Activated naive CD4-positive, alpha-beta T cell treated with anti-CD3 and anti-CD28 coated beads for 36 hours (primary cell): ENCODE measurements at regions of chr12 and their contacts with region 1.

Region 1: DNA sequence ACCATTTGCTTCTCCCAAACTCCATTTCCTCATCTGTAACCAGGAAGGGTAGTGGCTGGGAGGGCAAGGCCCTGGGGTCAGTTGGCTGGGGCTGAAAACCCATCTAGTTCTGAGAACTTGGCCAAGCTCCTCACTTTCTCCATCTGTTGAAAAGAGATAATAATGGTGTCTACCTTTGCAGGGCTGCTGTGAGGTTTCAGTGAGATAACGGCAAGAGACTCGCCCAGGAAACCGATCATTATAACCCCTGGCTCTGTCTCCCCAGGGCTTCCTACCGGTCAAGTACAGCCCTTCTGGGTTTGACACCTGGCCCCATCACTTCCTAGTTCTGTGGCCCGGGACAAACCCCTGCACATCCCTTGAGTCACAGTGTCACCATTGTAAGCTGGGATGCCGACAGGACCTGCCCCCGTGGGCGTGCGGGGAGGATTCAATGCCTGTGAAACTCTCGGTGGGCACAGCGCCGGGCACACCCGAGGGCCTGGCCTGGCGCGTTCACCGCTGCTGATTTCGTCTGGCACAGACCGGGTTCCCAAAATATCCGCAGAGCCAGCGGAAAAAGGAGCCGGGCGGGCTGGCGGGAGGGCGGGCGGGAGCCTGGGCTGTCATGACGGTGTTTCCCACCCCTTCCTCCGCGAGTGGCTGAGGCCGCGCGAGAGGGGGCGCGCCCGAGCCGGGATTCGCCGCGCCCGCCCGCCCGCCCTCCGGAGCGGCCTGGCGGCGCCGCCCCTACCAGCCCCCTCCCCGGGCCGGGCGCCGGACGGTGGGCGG is 4.4 kb downstream of the KMT5A start:
- DNase-seq: peak; percentile 85
- H3K4me3 Mint-ChIP-seq: peak overlapping the region; percentile 80
- H3K27ac Mint-ChIP-seq: peak overlapping the region; percentile 81
- H3K4me1 Mint-ChIP-seq: peaks cover 31% of the 10 kb centered on the region
- H3K27me3 Mint-ChIP-seq: no peaks in the 10 kb centered on the region

Region 2: GRCh38 chr12:122974274-122974891 is 414.0 kb before region 1 on chr12:
- CTCF ChIA-PET with region 1: no interaction called
- intact Hi-C with region 1: loop called (anchors 2 kb)
- DNase-seq: peak; percentile 100
- H3K4me3 Mint-ChIP-seq: peak overlapping the region; percentile 90
- H3K27ac Mint-ChIP-seq: peak overlapping the region; percentile 100
- H3K4me1 Mint-ChIP-seq: peaks cover 33% of the 10 kb centered on the region
- H3K27me3 Mint-ChIP-seq: no peaks in the 10 kb centered on the region

Region 3: GRCh38 chr12:123436017-123436964 is 47.9 kb after region 1 on chr12 and contains the start of gene RILPL2:
- CTCF ChIA-PET with region 1: no interaction called
- intact Hi-C with region 1: loop called (anchors 1 kb)
- DNase-seq: peak; percentile 97
- H3K4me3 Mint-ChIP-seq: peak within 1 kb of the TSS; percentile 92
- H3K27ac Mint-ChIP-seq: peak within 1 kb of the TSS; percentile 93
- H3K4me1 Mint-ChIP-seq: peaks cover 43% of the 10 kb centered on the region
- H3K27me3 Mint-ChIP-seq: no peaks in the 10 kb centered on the region
- total RNA-seq, gene RILPL2: 8.1 to 9.1 TPM

Region 4: GRCh38 chr12:123580772-123581171 is 192.4 kb after region 1 on chr12:
- CTCF ChIA-PET with region 1: interaction called, 9 read pairs
- intact Hi-C with region 1: loop called (anchors 1 kb)
- DNase-seq: no peak
- H3K4me3 Mint-ChIP-seq: no peak overlapping the region
- H3K27ac Mint-ChIP-seq: no peak overlapping the region
- H3K4me1 Mint-ChIP-seq: peaks cover 22% of the 10 kb centered on the region
- H3K27me3 Mint-ChIP-seq: no peaks in the 10 kb centered on the region

Region 5: DNA sequence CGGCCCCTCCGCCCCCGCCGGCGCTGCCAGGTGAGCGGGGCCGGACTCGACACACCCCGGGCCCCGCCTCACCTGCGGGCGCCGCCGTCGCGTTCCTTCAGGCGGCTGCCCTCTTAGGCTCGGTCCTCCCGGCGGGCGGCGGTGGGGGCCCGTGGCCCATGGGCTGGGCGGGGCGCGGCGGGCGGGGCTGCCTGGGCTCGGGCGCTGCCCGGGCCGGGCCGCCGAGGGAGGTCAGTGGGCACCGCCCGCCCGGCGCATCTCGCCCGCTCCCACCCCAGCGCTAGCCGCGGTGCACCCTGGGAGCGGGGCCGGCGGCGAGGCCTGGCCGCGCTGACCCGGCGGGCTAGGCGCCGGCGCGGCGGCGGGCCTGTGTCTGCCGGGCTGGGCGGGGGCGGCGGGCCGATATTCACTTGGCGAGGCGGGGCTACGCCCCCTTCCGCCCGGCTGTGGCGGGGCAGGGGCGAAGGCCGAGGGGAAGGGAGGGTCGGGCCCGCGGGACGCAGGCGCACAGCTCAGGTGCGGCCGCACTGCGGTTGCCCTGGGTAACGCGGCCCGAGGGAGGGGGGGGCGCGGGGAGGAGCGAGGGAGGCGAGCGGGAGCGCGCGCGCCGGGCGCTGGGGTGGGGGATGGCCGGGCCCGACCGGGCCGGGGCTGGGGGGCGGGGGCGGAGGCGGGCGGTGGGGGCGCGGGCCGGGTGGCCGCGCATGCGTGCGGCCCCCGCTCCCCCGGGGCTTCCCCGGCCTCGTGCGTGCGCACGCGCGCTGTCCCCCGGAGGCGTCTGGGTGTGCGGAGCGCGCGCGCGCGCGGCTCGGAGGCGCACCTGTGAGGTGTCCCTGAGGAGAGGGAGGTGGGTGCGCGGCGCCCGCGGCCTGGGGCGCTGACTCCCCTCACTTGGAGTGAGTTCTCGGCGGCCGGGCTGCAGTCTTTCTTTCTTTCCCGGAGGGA is 584.4 kb after region 1 on chr12 and contains the starts of genes CCDC92 and ZNF664:
- CTCF ChIA-PET with region 1: no interaction called
- intact Hi-C with region 1: loop called (anchors 5 kb)
- DNase-seq: peak; percentile 94
- H3K4me3 Mint-ChIP-seq: peak within 1 kb of the TSS; percentile 88
- H3K27ac Mint-ChIP-seq: peak within 1 kb of the TSS; percentile 61
- H3K4me1 Mint-ChIP-seq: peaks cover 33% of the 10 kb centered on the region
- H3K27me3 Mint-ChIP-seq: no peaks in the 10 kb centered on the region
- total RNA-seq, gene CCDC92: 3.3 to 3.7 TPM
- total RNA-seq, gene ZNF664: 42.2 to 46.0 TPM